ENCODE measurements at regions of chr5 and their contacts with region 1.

Region 1: DNA sequence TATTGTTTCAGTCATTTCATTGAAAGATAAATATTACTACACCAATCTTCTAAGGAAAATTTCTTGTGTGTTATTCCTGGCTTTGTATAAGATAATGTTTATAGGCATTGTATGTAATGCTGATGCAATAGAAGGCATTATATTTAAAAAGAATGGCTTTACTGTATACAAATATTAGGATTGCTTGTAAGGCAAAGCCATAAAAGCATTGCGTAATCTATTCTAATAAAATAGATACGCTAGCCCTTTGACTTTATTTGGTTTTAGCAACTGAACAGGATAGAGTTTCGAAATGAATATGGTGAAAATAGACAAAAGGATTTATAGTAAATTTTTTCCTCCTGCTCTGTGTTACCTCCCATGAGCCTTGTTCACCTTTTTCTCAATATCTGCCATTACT is 5.5 kb upstream of the LYSMD3 start:
- DNase-seq: no peak
- H3K4me3 ChIP-seq: no peak overlapping the region
- H3K4me3 Mint-ChIP-seq: no peak overlapping the region
- H3K27ac Mint-ChIP-seq: no peak overlapping the region
- H3K4me1 ChIP-seq: peaks cover 18% of the 10 kb centered on the region
- H3K4me1 Mint-ChIP-seq: peaks cover 14% of the 10 kb centered on the region
- H3K27me3 ChIP-seq: no peaks in the 10 kb centered on the region
- H3K27me3 Mint-ChIP-seq: no peaks in the 10 kb centered on the region
- CTCF ChIP-seq: no peak

Region 2: DNA sequence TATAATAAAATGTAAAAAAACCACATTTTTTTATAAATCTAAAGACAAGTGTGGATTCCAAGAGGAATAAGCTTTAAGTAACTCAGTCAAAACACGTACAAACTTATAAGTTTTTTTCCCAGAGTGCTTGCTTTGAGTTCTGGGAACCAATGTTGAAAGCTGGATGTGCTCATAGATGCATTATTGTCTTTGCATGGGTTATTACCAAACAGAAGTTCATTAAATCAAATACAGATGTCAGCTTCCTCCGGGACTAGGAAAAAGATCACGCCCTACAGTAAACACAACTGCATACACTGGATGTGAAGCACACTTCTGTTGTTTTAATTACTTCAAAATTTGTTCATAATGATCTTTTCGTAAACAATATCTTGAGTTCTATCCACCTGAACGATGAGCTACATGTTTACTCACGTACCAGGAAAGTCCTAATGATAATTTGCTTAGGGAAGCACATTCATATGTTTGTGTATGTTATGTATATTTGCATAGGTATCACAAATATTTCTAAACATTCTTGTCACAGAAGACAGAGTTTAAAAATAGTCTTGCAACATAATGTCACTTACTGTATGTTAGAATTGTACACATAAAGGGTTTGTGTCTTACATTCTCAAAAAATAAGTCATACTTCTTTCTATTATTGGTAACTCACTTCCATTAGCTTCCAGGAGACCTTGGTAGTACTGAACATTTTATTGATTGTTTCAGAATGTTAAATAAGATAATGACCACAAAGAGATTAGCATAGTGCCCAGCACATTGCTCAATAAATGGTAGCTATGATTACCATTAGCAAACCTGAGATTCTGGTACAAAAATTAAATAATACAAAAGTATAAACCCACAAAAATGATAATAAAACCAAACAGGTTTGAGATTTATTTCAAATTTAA is 552.8 kb before region 1 on chr5:
- CTCF ChIA-PET with region 1: no interaction called
- POLR2A ChIA-PET with region 1: no interaction called
- intact Hi-C with region 1: no loop called
- DNase-seq: no peak
- H3K4me3 ChIP-seq: no peak overlapping the region
- H3K4me3 Mint-ChIP-seq: no peak overlapping the region
- H3K27ac Mint-ChIP-seq: no peak overlapping the region
- H3K4me1 ChIP-seq: no peaks in the 10 kb centered on the region; the same call in 1 of the 2 replicates
- H3K4me1 Mint-ChIP-seq: peaks cover 7% of the 10 kb centered on the region
- H3K27me3 ChIP-seq: no peaks in the 10 kb centered on the region
- H3K27me3 Mint-ChIP-seq: no peaks in the 10 kb centered on the region
- CTCF ChIP-seq: no peak

Region 3: GRCh38 chr5:90548069-90548593 is 13.2 kb after region 1 on chr5:
- CTCF ChIA-PET with region 1: no interaction called
- POLR2A ChIA-PET with region 1: no interaction called
- intact Hi-C with region 1: loop called (anchors 1 kb)
- DNase-seq: peak; percentile 75 to 76
- H3K4me3 ChIP-seq: no peak overlapping the region
- H3K4me3 Mint-ChIP-seq: no peak overlapping the region
- H3K27ac Mint-ChIP-seq: peak overlapping the region; percentile 46
- H3K4me1 ChIP-seq: peaks cover 26% of the 10 kb centered on the region
- H3K4me1 Mint-ChIP-seq: peaks cover 4% of the 10 kb centered on the region
- H3K27me3 ChIP-seq: no peaks in the 10 kb centered on the region
- H3K27me3 Mint-ChIP-seq: no peaks in the 10 kb centered on the region
- CTCF ChIP-seq: no peak